PC-3 (cell line): ENCODE measurements at regions of chr21 and their contacts with region 1.

Region 1: GRCh38 chr21:32844653-32845436 is 73.3 kb upstream of the PAXBP1 start:
- DNase-seq: peak; percentile 61
- ATAC-seq: peak; percentile 50
- H3K4me3 ChIP-seq: no peak overlapping the region
- H3K27ac ChIP-seq: no peak overlapping the region
- H3K4me1 ChIP-seq: peaks cover 5% of the 10 kb centered on the region; the same call in 1 of the 2 replicates
- H3K27me3 ChIP-seq: peaks cover 68% of the 10 kb centered on the region
- CTCF ChIP-seq: 0 out of 2 replicates have a peak, but pooled peaks have one; percentile 31

Region 2: DNA sequence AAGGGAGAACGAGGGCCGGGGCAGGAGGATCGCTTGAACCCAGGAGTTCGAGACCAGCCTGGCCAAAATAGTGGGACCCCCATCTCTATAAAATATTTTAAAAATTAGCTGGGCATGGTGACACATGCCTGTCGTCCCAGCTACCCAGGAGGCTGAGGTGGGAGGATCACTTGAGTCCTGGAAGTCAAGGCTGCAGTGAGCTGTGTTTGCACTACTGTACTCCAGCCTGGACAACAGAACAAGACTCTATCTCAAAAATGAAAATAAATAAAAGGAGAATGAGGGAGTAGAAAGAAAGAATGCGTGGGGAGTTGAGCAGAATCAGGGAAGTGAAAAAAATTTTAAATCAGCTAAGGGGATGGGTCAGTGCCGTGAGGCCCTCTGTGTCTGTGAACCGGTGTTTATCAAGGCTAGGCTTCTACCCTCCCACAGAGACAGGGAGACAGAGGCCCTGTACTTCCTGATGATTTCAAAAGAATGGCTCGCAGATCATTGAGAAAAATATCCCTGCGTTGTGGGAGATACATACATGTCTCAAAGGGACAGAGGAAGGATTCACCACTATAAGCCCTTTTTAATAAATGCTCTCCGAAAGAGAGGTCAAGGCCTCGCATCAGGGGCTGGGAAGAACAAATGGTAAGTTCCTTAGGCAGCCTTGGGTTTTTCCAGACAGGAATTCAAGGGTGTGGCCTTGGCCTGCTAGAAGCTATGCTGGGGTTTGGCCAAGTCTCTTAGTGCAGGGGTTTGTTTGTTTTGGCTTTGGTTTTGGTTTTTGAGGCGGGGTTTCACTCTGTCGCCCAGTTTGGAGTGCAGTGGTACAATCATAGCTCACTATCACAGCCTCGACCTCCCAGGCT is 442.0 kb after region 1 on chr21:
- CTCF ChIA-PET with region 1: no interaction called
- POLR2A ChIA-PET with region 1: no interaction called
- intact Hi-C with region 1: no loop called
- DNase-seq: peak; percentile 82
- ATAC-seq: peak; percentile 87
- H3K4me3 ChIP-seq: peak overlapping the region; percentile 21; the same call in 1 of the 2 replicates
- H3K27ac ChIP-seq: peak overlapping the region; percentile 55
- H3K4me1 ChIP-seq: peaks cover 15% of the 10 kb centered on the region
- H3K27me3 ChIP-seq: no peaks in the 10 kb centered on the region
- CTCF ChIP-seq: no peak

Region 3: DNA sequence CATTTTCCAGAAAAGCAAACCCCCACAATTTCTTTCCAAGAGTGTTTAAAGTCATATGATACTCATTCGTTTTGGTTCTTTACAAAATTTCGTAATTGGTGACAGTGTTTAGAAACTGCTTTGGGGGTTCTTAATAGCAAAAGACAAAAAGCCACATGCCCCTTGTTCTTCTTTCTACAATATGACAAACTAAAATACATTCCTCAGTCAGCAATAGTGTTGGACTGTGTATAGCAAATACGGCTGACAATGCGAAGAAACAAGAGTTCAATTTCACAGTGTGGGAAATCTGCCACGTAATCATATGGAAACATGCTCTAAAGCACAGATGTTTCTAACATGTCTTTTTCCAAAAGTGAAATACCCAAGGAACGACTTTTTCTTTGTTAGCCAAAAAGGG is 472.3 kb after region 1 on chr21:
- CTCF ChIA-PET with region 1: no interaction called
- POLR2A ChIA-PET with region 1: no interaction called
- intact Hi-C with region 1: no loop called
- DNase-seq: no peak
- ATAC-seq: no peak
- H3K4me3 ChIP-seq: no peak overlapping the region
- H3K27ac ChIP-seq: no peak overlapping the region
- H3K4me1 ChIP-seq: no peaks in the 10 kb centered on the region
- H3K27me3 ChIP-seq: peaks cover 21% of the 10 kb centered on the region
- CTCF ChIP-seq: no peak

Region 4: DNA sequence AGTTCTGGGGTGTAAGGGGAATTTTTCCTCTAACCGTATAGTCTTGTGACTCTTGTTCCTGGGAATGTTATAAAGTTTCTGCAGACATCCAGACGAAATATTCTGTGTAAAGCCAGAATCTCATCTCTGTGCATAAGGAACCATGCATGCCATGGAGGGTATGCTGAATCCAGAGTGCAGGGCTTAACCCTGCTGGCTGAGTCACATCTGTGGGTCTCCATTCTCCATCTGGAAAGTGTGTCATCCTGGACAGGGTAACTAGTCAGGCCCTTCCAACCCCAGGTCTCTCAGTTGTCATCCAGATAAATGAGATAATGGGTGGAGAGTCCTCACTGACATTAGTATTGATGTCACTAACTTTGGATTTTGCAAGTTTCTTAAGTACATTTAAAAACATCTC is 1022.0 kb after region 1 on chr21:
- CTCF ChIA-PET with region 1: no interaction called
- POLR2A ChIA-PET with region 1: interaction called, 14 read pairs
- intact Hi-C with region 1: no loop called
- DNase-seq: no peak
- ATAC-seq: no peak
- H3K4me3 ChIP-seq: no peak overlapping the region
- H3K27ac ChIP-seq: no peak overlapping the region
- H3K4me1 ChIP-seq: no peaks in the 10 kb centered on the region
- H3K27me3 ChIP-seq: no peaks in the 10 kb centered on the region
- CTCF ChIP-seq: no peak